PC-3 (cell line): ENCODE measurements at regions of chr13 and their contacts with region 1.

Region 1: GRCh38 chr13:105817021-105817420 is 718.4 kb downstream of the EFNB2 start:
- DNase-seq: peak; percentile 38
- ATAC-seq: peak; percentile 40; the same call in 1 of the 2 replicates
- H3K4me3 ChIP-seq: no peak overlapping the region
- H3K27ac ChIP-seq: no peak overlapping the region
- H3K4me1 ChIP-seq: peaks cover 10% of the 10 kb centered on the region; the same call in 1 of the 2 replicates
- H3K27me3 ChIP-seq: no peaks in the 10 kb centered on the region
- CTCF ChIP-seq: no peak

Region 2: GRCh38 chr13:105509981-105510762 is 306.8 kb before region 1 on chr13:
- CTCF ChIA-PET with region 1: no interaction called
- POLR2A ChIA-PET with region 1: no interaction called
- intact Hi-C with region 1: no loop called
- DNase-seq: no peak
- ATAC-seq: no peak
- H3K4me3 ChIP-seq: no peak overlapping the region
- H3K27ac ChIP-seq: no peak overlapping the region
- H3K4me1 ChIP-seq: no peaks in the 10 kb centered on the region
- H3K27me3 ChIP-seq: no peaks in the 10 kb centered on the region
- CTCF ChIP-seq: no peak

Region 3: DNA sequence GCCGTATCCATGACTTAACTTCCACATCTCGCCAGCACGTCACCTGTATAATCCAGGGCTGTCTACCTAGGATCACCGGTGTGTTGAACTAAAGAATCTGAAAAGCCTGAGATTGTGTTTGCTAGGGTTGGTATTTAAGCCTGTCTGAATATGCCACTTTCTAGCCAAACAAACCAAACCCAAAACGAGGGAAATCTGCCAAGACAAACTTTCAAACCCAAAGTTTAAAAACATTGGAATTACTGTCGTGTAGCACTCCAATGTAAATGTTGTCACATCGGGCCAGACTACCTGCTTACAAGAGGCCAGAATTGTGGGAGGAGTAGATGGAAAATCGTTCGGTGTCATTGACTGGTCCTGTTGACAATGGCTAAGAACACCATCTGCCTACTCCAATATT is 29.4 kb before region 1 on chr13:
- CTCF ChIA-PET with region 1: no interaction called
- POLR2A ChIA-PET with region 1: no interaction called
- intact Hi-C with region 1: loop called (anchors 1 kb)
- DNase-seq: peak; percentile 11
- ATAC-seq: peak; percentile 61
- H3K4me3 ChIP-seq: no peak overlapping the region
- H3K27ac ChIP-seq: no peak overlapping the region
- H3K4me1 ChIP-seq: peaks cover 6% of the 10 kb centered on the region; the same call in 1 of the 2 replicates
- H3K27me3 ChIP-seq: no peaks in the 10 kb centered on the region
- CTCF ChIP-seq: no peak

Region 4: DNA sequence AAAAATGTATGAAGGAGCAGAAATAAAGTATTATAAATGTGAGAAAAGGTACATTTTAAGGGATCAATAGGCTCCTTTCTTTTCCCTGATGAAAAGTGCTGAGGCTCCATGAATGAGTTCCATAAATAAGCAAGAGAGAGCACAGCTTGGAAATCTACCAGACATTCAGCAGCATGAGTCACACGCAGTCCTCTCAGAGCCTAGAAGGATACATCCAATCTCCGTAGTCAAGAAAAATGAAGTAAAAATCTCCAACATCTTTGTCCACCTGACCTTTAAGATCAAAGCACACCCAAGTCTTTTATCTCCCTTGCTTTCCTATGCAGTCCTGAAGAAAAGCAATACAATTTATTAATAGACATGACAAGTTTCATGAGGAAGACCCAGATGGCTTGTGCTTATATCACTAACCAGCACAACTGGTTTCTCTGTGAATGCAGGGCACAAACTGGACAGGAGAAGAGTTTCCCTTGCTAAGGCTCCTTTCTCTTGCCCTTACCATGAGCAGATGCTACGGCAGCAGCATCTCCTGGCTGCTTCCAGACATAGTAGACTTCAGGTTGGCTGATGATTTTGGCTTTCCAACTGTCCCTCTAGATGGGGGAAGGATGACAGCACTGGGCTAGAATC is 12.3 kb before region 1 on chr13:
- CTCF ChIA-PET with region 1: no interaction called
- POLR2A ChIA-PET with region 1: no interaction called
- intact Hi-C with region 1: no loop called
- DNase-seq: peak; percentile 43
- ATAC-seq: peak; percentile 71
- H3K4me3 ChIP-seq: no peak overlapping the region
- H3K27ac ChIP-seq: no peak overlapping the region
- H3K4me1 ChIP-seq: peaks cover 5% of the 10 kb centered on the region; the same call in 1 of the 2 replicates
- H3K27me3 ChIP-seq: no peaks in the 10 kb centered on the region
- CTCF ChIP-seq: no peak

Region 5: GRCh38 chr13:105972871-105973491 is 156.0 kb after region 1 on chr13:
- CTCF ChIA-PET with region 1: no interaction called
- POLR2A ChIA-PET with region 1: no interaction called
- intact Hi-C with region 1: loop called (anchors 1 kb)
- DNase-seq: peak; percentile 30
- ATAC-seq: no peak
- H3K4me3 ChIP-seq: no peak overlapping the region
- H3K27ac ChIP-seq: no peak overlapping the region
- H3K4me1 ChIP-seq: peaks cover 33% of the 10 kb centered on the region
- H3K27me3 ChIP-seq: no peaks in the 10 kb centered on the region
- CTCF ChIP-seq: no peak

Region 6: GRCh38 chr13:106104281-106104901 is 287.4 kb after region 1 on chr13:
- CTCF ChIA-PET with region 1: no interaction called
- POLR2A ChIA-PET with region 1: no interaction called
- intact Hi-C with region 1: loop called (anchors 10 kb)
- DNase-seq: peak; percentile 91
- ATAC-seq: peak; percentile 75
- H3K4me3 ChIP-seq: peak overlapping the region; percentile 46; the same call in 1 of the 2 replicates
- H3K27ac ChIP-seq: peak overlapping the region; percentile 100
- H3K4me1 ChIP-seq: peaks cover 71% of the 10 kb centered on the region
- H3K27me3 ChIP-seq: no peaks in the 10 kb centered on the region
- CTCF ChIP-seq: no peak